GM10248 (cell line): ENCODE measurements at regions of chr6 and their contacts with region 1.

Region 1: GRCh38 chr6:84399003-84399402 is 171.6 kb upstream of the CEP162 start:
- DNase-seq: no peak
- CTCF ChIP-seq: no peak

Region 2: DNA sequence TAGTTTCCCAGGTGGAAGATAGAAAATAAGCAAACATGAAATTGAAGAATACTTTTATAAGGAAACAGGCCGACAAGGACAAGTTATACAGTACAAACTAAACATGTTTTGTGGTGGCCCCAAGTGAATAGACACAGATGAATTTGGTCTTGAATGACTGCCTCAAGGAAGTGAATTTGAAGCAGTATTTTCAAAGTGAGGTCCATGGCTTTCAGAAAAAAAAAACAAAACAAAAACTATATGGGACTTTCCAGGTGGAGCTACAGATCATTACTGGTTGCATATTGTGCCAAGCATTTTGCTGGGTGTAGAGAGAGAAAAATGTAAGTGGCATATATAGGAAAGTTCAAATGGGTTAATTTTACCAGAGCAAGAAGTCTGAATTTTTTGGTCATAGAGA is 470.7 kb before region 1 on chr6:
- CTCF ChIA-PET with region 1: no interaction called
- POLR2A ChIA-PET with region 1: no interaction called
- DNase-seq: no peak
- CTCF ChIP-seq: no peak

Region 3: DNA sequence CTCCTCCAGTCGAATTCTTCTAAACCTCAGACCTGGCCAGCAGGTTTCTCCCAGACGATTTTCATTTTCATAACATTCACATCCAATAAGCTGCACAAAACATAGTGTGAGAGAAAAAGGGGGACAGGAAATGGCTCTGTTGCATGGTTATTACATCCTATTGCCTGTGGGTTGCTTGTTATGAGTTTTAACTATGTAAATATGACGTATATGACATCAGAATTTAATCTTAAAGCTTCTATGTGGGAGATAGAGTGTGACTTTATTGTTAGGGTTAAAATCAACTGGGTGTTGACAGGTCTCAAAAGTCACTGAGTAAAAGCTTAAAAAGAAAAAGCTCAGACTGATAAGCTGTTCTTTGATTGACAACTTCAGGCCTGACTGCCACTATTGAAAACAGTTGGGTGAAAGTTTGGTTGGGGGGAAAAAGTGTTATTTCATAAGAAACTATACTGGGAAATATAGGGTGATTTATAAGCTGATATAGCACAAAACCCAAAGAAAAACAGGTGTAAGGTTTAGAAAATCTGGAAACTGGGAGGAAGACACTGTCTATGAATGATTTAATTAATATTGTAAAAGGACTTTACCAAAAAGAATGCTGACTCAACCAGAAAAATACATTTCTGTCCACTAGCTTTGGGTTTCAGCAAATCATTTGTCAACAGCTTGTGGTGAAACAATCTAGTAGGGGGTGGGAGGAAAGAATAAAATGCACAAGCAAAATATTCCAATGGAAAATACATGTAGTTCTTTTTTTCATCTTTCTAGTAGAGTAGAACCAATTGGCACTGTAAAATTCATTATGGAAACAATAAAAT is 37.4 kb before region 1 on chr6:
- CTCF ChIA-PET with region 1: no interaction called
- POLR2A ChIA-PET with region 1: no interaction called
- DNase-seq: no peak
- CTCF ChIP-seq: no peak

Region 4: DNA sequence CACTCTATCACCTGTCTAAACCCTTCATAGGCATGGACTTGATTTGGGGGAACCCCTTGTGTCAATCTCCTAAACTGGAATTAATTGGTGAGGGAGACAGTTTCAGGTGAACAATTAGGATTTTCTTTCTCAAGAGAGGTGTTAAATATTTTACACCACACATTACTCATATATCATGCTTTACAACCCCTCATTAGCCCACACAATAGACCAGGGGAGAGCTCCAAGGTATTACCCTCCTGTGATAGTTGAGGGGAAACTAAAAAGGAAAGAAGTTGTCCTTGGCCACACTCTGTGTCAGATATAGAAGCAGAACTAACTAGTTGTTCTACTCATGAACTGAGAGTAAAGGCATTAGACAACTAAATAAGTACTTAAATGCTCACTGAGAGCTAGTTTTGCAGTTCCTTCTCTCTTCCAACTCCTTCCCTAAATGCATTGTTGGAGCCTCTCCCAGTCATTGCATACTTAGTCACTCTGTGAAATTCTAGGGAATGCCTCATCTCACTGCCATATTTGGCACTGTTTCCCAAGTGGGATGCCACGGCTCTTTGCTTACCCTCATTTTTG is 12.1 kb after region 1 on chr6:
- CTCF ChIA-PET with region 1: interaction called, 10 read pairs
- POLR2A ChIA-PET with region 1: no interaction called
- DNase-seq: no peak
- CTCF ChIP-seq: no peak